Tibial artery (tissue), 4 donors: ENCODE measurements at regions of chr11 and their contacts with region 1.

Region 1: DNA sequence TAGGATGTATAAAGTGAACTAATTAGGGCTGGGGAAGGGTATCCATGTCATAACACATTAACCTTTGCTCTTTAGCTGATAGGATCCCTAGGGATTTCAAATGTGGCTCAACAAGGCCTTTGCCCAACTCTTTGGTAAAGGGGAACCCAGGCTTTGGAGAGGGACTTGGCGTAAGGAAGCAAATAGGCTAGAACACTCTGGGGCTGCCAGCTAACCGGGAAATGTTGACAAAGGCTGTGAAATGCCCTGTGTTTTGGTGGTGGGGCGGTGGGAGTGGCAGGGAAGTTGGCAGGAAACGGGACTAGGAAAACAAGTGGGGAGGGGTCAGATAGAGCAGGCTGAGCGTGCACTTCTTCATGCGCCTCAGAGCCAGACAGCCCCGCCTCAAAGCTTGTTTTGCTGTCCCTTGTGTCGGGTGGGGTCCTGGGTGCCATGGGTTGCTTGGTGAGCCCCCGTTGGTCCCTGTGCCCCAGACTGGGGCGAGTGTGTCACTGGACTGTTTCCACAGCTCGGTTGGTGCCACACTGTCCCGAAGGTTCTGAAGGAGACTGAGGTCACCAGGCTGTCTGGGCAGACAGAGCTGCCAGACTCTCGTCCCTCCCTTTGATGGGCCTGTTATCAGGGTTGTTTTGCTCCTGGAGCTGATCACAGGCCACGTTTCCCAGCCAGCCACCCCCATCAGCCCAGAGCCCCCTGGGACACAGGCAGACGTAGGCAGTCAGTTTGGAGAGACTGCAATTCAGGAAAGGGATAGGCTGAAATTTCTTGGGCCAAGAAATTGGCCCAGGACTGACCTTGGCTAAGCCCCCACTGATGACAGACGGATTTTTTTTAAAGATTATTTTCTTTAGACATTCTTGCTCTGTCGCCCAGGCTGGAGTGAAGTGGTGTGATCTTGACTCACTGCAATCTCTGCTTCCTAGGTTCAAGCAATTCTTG is 19.6 kb downstream of the KCTD21 start:
- DNase-seq: peak; percentile 97 to 99
- H3K4me3 ChIP-seq: no peak overlapping the region
- H3K27ac ChIP-seq: peak overlapping the region; percentile 82 to 94
- H3K4me1 ChIP-seq: peaks cover 0 to 78% (median 45%) of the 10 kb centered on the region in 4 donors
- H3K27me3 ChIP-seq: no peaks in the 10 kb centered on the region
- CTCF ChIP-seq: no peak

Region 2: DNA sequence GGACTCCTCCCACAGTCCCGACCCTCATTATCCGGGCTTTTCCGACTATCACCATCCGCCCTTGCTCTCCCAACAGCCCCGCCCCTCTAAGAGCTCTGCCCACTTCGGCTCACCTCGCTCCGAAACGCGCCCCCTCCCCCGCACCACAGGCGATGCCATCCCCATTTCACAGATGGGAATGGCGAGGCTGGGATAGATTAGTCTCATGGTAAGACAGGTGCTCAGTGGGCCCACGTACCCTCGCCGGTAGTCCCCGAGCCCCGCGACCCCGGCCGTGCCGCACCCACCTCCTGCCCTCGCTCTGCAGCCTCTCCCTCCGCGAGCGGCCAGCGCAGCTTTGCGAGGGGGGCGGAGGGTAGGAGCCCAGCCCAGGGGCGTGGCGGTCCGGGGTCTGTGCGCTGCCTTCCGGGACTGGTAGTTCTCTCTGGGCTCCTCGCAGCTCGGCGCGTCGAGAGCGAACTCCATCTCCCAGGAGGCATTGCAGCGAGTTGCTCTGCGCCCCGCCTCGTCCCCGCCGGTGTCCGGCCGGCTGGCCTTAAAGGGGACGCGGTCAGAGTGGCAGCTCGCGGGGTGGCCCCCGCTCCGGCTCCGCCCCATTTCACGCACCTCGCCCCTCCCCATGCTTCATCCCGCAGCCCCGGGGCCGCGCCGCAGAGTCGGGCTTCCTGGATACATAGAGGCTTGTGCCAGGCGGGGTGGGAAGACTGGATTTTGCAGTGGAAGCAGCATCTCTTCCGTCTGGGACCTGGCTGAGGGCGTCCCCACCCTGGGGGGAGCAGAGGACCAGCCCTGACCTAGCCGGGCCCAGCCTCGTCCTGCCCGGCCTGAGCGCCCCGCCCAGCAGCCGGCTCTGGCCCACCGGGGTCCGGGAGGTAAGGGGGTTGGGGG is 19.7 kb after region 1 on chr11 and contains the starts of genes KCTD21 and USP35:
- intact Hi-C with region 1: loop called (anchors 2 kb)
- DNase-seq: peak; percentile 97 to 99
- H3K4me3 ChIP-seq: peak within 1 kb of the TSS; percentile 81 to 85
- H3K27ac ChIP-seq: peak within 1 kb of the TSS; percentile 91 to 92
- H3K4me1 ChIP-seq: peaks cover 0 to 63% (median 59%) of the 10 kb centered on the region in 4 donors
- H3K27me3 ChIP-seq: no peaks in the 10 kb centered on the region
- CTCF ChIP-seq: no peak

Region 3: DNA sequence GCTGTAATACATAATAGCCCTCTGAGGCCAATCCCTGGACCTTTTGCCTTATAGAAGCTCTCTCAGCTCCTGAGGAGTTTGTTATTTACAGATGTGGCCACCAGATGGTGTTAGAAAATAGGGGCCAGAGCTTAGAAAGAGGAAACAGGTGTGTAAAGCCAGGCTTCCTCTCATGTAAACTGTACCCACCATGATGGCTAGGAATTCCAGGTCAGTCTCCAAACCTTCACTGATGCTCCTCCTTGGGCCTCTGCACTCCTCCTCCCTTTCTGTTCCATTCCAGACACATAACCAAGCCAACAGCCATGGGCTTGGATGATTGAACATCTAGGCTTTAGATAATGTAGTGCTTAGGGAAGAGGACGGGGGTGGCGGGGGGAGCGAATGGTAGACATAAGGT is 59.7 kb after region 1 on chr11:
- intact Hi-C with region 1: no loop called
- DNase-seq: no peak
- H3K4me3 ChIP-seq: no peak overlapping the region
- H3K27ac ChIP-seq: peak overlapping the region in 1 of 2 donors; percentile 17
- H3K4me1 ChIP-seq: peaks cover 0 to 40% (median 16%) of the 10 kb centered on the region in 4 donors
- H3K27me3 ChIP-seq: no peaks in the 10 kb centered on the region
- CTCF ChIP-seq: peak; percentile 40 to 59